ENCODE measurements at regions of chr16 and their contacts with region 1.

Region 1: GRCh38 chr16:679814-680622 is at the start of gene STUB1:
- DNase-seq: peak; percentile 90
- ATAC-seq: peak; percentile 63 to 82 (median 70)
- H3K4me3 ChIP-seq: peak within 1 kb of the TSS; percentile 50 to 95 (median 71)
- H3K27ac ChIP-seq: peak within 1 kb of the TSS; percentile 66 to 99 (median 96)
- H3K4me1 ChIP-seq: peaks cover 30 to 60% (median 49%) of the 10 kb centered on the region in 9 donors
- H3K27me3 ChIP-seq: peaks cover 0 to 22% (median 0%) of the 10 kb centered on the region in 7 donors
- CTCF ChIP-seq: no peak
- total RNA-seq, gene STUB1: 101 to 147 (median 116) TPM

Region 2: DNA sequence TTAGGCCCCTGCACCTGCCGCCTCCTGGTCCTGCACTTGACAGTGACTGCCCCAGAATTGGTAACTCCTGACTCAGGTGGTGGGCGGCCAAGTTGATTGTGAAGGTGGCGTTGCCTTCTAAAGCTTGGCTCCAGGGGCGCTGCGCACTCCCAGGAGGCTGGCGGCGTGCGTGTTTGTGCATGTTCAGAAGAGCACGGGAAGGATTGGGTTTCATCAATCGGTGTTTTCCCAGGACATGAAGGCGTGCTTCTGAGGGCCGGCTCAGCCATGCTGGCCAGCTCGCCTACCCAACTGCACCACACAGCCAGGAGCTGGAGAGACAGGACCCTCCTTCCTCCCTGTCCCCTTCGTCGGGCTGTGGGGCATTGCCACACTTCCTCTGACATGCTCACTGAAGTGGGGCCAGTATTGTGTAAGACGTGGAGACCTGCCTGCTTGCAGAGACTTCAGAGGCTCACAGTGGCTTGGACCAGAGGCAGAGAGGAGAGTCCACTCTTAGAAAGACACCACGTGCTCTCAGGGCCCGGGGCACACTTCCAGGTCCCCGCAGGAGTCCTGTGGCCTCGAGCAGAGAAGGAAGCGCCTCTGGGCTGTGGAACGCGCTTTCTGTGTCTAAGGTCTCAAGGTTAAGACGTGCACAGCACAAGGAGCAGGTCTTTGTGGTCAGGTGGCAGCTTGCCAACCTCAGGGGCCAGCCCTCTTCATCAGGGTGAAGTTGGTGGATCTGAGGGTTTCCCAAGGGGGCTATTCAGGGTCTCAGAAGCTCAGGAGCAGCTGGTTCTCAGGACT is 87.3 kb before region 1 on chr16:
- intact Hi-C with region 1: no loop called
- DNase-seq: no peak
- ATAC-seq: no peak
- H3K4me3 ChIP-seq: peak overlapping the region in 1 of 10 donors; percentile 4
- H3K27ac ChIP-seq: peak overlapping the region in 1 of 10 donors; percentile 24
- H3K4me1 ChIP-seq: peaks cover 4 to 51% (median 31%) of the 10 kb centered on the region in 9 donors
- H3K27me3 ChIP-seq: no peaks in the 10 kb centered on the region
- CTCF ChIP-seq: no peak

Region 3: GRCh38 chr16:641302-642188 is 38.5 kb before region 1 on chr16 and contains the start of gene MCRIP2:
- intact Hi-C with region 1: no loop called
- DNase-seq: peak; percentile 85 to 90
- ATAC-seq: peak; percentile 49 to 69 (median 66)
- H3K4me3 ChIP-seq: peak within 1 kb of the TSS; percentile 46 to 96 (median 72)
- H3K27ac ChIP-seq: peak within 1 kb of the TSS; percentile 89 to 99 (median 96)
- H3K4me1 ChIP-seq: peaks cover 16 to 66% (median 43%) of the 10 kb centered on the region in 9 donors
- H3K27me3 ChIP-seq: no peaks in the 10 kb centered on the region
- CTCF ChIP-seq: peak in 1 of 9 donors; percentile 5
- total RNA-seq, gene MCRIP2: 68.8 to 152 (median 87.8) TPM

Region 4: GRCh38 chr16:720990-721764 is 41.2 kb after region 1 on chr16 and contains the start of gene ANTKMT:
- intact Hi-C with region 1: loop called in 1 of 10 experiments (anchors 2 kb)
- DNase-seq: peak; percentile 68 to 82
- ATAC-seq: peak; percentile 71 to 91 (median 80)
- H3K4me3 ChIP-seq: peak within 1 kb of the TSS; percentile 64 to 99 (median 84)
- H3K27ac ChIP-seq: peak within 1 kb of the TSS; percentile 44 to 97 (median 94)
- H3K4me1 ChIP-seq: peaks cover 14 to 48% (median 34%) of the 10 kb centered on the region in 9 donors
- H3K27me3 ChIP-seq: peaks cover 0 to 15% (median 4%) of the 10 kb centered on the region in 7 donors
- CTCF ChIP-seq: peak in 2 of 9 donors; percentile 16 to 35
- total RNA-seq, gene ANTKMT: 23.3 to 40.3 (median 31.0) TPM